ENCODE measurements at regions of chr4 and their contacts with region 1.

Region 1: GRCh38 chr4:26220698-26221097 is 100.1 kb upstream of the RBPJ start:
- DNase-seq: peak; percentile 31
- H3K4me3 Mint-ChIP-seq: peak overlapping the region; percentile 61
- H3K27ac Mint-ChIP-seq: peak overlapping the region; percentile 80
- H3K4me1 Mint-ChIP-seq: peaks cover 34% of the 10 kb centered on the region
- H3K27me3 Mint-ChIP-seq: peaks cover under 1% of the 10 kb centered on the region
- CTCF ChIP-seq: no peak

Region 2: DNA sequence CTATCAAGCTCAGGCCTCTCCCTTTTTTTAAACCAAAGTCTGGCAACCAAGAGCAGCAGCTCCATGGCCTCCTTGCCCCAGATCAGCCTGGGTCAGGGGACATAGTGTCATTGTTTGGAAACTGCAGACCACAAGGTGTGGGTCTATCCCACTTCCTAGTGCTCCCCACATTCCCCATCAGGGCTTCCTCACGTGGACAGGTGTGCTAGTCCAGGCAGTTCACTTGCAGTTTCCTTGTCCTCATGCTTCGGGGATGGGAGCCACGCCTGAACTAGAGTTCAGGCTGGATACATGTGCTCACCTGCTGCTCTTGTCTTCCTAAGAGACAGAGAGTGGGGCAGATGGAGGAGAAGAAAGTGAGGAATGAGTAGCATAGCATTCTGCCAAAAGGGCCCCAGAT is 543.5 kb before region 1 on chr4:
- CTCF ChIA-PET with region 1: no interaction called
- intact Hi-C with region 1: no loop called
- DNase-seq: no peak
- H3K4me3 Mint-ChIP-seq: no peak overlapping the region
- H3K27ac Mint-ChIP-seq: no peak overlapping the region
- H3K4me1 Mint-ChIP-seq: peaks cover 10% of the 10 kb centered on the region
- H3K27me3 Mint-ChIP-seq: no peaks in the 10 kb centered on the region
- CTCF ChIP-seq: no peak

Region 3: DNA sequence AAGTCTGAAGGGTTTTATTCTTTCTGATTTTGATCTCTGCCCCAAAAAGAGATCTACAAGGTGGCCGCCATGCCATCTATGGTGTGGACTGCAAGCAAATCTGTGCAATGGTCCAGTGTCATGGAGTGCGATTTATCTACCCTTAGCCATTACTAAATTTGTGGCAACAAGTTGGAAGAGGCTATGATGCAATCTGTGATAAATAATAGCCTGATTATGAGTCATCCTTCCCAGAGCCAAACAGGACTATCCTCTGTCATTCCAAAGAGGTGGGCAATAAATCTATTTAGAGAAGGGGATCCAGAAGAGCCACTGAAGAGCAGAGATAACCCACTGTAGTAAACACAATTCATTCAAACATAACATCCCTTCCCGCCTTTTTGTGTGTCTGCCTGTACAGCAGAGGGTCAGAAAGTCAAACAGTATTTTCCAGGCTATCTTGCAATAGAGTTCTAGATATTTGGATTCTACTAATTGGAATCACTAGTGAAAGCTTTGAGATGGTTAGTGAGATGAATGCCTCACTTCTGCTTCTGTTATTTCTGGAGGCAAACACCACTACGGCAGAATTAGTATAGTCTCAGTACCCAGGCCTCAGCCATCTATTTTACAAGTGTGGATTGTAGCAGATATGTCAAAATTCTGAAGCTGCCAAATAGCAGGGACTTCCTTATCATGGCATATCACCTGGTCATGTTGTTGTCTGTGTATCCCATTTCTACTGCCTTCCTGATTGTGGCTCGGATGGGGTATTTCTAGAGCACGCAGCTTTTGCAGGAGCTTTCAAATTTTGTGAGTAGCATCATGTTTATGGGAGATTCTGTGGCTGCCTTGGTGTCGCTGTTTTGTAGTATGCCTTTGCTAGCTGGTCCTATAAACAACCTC is 114.6 kb before region 1 on chr4:
- CTCF ChIA-PET with region 1: no interaction called
- intact Hi-C with region 1: no loop called
- DNase-seq: no peak
- H3K4me3 Mint-ChIP-seq: no peak overlapping the region
- H3K27ac Mint-ChIP-seq: peak overlapping the region; percentile 67
- H3K4me1 Mint-ChIP-seq: peaks cover 9% of the 10 kb centered on the region
- H3K27me3 Mint-ChIP-seq: no peaks in the 10 kb centered on the region
- CTCF ChIP-seq: no peak

Region 4: DNA sequence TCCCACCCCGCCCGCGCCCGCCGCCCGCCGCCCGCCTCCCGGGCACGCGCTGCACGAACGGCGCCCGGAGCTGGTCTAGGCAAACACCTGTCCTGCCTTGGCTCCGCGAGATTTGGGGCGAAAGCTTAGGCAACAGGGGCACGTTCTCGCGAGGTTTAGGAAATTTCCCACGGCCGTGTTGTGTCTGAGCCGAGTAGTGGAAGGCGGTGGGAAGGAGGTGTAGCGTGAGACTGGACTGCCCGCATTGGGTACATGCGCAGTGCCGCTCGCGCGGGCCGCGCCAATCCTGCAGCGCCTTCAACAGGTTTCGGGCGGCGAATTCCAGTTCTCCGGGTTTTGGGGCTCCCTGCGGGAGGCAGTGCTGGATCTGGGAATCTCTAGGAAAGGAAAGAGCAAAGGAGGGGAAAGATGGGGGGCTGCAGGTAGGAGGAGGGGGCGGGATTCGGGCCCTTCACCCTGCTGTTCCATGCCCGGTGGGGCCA is 98.8 kb after region 1 on chr4:
- CTCF ChIA-PET with region 1: no interaction called
- intact Hi-C with region 1: loop called (anchors 10 kb)
- DNase-seq: peak; percentile 95
- H3K4me3 Mint-ChIP-seq: peak overlapping the region; percentile 86
- H3K27ac Mint-ChIP-seq: peak overlapping the region; percentile 89
- H3K4me1 Mint-ChIP-seq: no peaks in the 10 kb centered on the region
- H3K27me3 Mint-ChIP-seq: no peaks in the 10 kb centered on the region
- CTCF ChIP-seq: no peak